OCI-LY7 (cell line): ENCODE measurements at regions of chr9 and their contacts with region 1.

Region 1: GRCh38 chr9:135343837-135344522 is 135.6 kb upstream of the PPP1R26 start:
- DNase-seq: peak; percentile 60
- H3K4me3 ChIP-seq: no peak overlapping the region
- H3K27ac ChIP-seq: no peak overlapping the region
- H3K4me1 ChIP-seq: no peaks in the 10 kb centered on the region
- CTCF ChIP-seq: peak; percentile 93

Region 2: DNA sequence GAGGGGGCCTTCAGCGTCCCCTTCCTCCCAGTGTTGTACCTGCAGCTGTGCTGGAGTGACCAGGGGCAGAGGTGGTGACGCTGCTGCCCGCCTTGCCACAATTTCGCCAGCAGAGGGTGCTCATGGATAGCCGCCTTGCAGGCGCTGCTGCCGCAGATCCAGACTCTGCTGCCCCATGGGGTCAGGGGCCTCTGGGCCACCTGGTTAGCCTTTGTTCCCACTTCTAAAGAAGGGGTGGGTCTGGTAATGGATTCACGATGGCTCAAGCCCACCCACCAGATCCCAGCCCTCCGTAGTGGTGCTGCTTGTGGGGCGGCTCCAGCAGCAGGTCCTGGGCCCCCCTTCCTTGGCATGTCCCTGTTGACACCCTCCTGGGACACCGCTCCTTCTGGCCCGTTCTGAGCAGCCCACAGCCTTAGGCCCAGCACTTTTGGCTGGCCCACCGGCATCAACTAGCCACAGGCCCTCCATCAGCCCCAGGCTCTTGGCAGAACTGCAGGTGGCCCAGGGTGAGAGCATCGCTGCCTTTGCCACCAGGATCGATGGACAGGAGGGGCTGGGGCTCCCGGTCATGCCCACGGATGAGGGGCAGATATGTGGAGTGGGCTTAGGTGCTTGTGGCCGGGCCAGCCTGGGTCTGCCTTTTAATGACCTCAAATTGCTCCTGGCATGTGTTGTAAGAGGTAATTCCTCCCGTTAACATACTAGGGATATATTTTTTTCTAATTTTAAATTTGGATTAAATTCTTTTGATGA is 645.2 kb before region 1 on chr9:
- CTCF ChIA-PET with region 1: no interaction called
- POLR2A ChIA-PET with region 1: no interaction called
- intact Hi-C with region 1: loop called (anchors 2 kb)
- DNase-seq: peak; percentile 60
- H3K4me3 ChIP-seq: no peak overlapping the region
- H3K27ac ChIP-seq: no peak overlapping the region
- H3K4me1 ChIP-seq: no peaks in the 10 kb centered on the region
- CTCF ChIP-seq: peak; percentile 89

Region 3: GRCh38 chr9:135085830-135086546 is 258.0 kb before region 1 on chr9:
- CTCF ChIA-PET with region 1: no interaction called
- POLR2A ChIA-PET with region 1: no interaction called
- intact Hi-C with region 1: loop called (anchors 2 kb)
- DNase-seq: peak; percentile 26
- H3K4me3 ChIP-seq: no peak overlapping the region
- H3K27ac ChIP-seq: no peak overlapping the region
- H3K4me1 ChIP-seq: no peaks in the 10 kb centered on the region
- CTCF ChIP-seq: peak; percentile 82

Region 4: GRCh38 chr9:135130266-135130976 is 213.6 kb before region 1 on chr9:
- CTCF ChIA-PET with region 1: no interaction called
- POLR2A ChIA-PET with region 1: no interaction called
- intact Hi-C with region 1: no loop called
- DNase-seq: no peak
- H3K4me3 ChIP-seq: no peak overlapping the region
- H3K27ac ChIP-seq: no peak overlapping the region
- H3K4me1 ChIP-seq: no peaks in the 10 kb centered on the region
- CTCF ChIP-seq: no peak